Endothelial cell of umbilical vein (primary cell): ENCODE measurements at regions of chr7 and their contacts with region 1.

Region 1: DNA sequence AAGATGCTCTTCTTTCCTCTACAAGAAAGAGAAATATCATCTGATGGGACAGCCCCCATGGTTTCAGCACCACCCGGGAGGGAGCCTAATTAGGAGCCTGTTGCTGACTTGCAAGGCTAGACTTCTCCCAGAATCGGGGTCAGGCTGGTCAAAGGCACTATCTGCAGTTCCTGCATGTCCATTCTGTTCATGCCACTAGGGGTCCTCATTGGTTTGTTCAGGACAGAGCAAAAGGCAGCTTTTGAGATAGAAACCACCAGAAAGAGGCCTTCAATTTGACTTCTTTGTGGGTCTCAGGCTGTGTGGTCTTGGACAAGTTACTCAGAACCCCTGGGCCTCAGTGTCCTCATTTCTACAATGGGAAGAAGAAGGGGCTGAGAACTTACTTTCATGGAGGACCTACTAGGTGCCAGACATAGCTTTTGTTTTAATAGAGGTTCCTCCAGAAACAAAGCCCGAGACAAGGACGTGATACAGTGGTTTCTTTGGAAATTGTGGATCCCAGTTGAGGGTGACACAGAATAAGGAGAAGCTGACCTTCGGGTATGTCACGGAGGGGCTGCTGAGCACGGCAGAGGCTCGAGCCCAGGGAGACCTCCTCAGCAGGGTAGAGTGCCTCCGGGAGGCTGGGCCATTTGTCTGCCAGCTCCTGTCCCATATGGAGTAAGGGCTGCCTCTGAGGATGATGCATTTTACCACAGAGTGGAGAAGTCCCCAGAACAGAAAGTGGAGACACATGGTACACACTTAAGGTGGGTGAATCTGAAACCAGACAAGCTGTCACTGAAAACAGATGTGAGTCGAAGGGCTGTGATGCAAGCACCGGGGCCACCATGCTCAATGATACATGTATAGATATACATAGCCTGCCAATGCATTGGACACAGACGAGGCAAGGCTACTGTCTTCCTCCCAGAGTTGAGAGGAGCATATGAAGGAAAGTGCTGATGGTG is 33.1 kb upstream of the NEUROD6 start:
- DNase-seq: peak; percentile 24
- H3K4me3 ChIP-seq: no peak overlapping the region
- H3K27ac ChIP-seq: no peak overlapping the region
- H3K4me1 ChIP-seq: no peaks in the 10 kb centered on the region
- H3K27me3 ChIP-seq: no peaks in the 10 kb centered on the region
- CTCF ChIP-seq: peak; percentile 52 to 57
- POLR2A ChIP-seq: no peak

Region 2: GRCh38 chr7:31633894-31634494 is 260.4 kb after region 1 on chr7:
- CTCF ChIA-PET with region 1: interaction called, 29 read pairs
- POLR2A ChIA-PET with region 1: no interaction called
- dilution Hi-C with region 1: no loop called
- intact Hi-C with region 1: loop called (anchors 2 kb)
- DNase-seq: peak; percentile 44
- H3K4me3 ChIP-seq: no peak overlapping the region
- H3K27ac ChIP-seq: no peak overlapping the region
- H3K4me1 ChIP-seq: no peaks in the 10 kb centered on the region
- H3K27me3 ChIP-seq: no peaks in the 10 kb centered on the region
- CTCF ChIP-seq: peak; percentile 26 to 43
- POLR2A ChIP-seq: no peak